ENCODE measurements at regions of chr3 and their contacts with region 1.

Region 1: GRCh38 chr3:160501325-160501724 is 51.7 kb upstream of the TRIM59 start:
- DNase-seq: no peak
- ATAC-seq: no peak
- H3K4me3 ChIP-seq: no peak overlapping the region
- H3K27ac ChIP-seq: no peak overlapping the region
- H3K4me1 ChIP-seq: no peaks in the 10 kb centered on the region
- H3K27me3 ChIP-seq: no peaks in the 10 kb centered on the region
- CTCF ChIP-seq: no peak
- POLR2A ChIP-seq: no peak

Region 2: GRCh38 chr3:160133757-160134156 is 367.6 kb before region 1 on chr3:
- in situ Hi-C with region 1: no loop called
- intact Hi-C with region 1: no loop called
- DNase-seq: no peak
- ATAC-seq: no peak
- H3K4me3 ChIP-seq: no peak overlapping the region
- H3K27ac ChIP-seq: no peak overlapping the region
- H3K4me1 ChIP-seq: no peaks in the 10 kb centered on the region
- H3K27me3 ChIP-seq: no peaks in the 10 kb centered on the region
- CTCF ChIP-seq: no peak
- POLR2A ChIP-seq: no peak

Region 3: DNA sequence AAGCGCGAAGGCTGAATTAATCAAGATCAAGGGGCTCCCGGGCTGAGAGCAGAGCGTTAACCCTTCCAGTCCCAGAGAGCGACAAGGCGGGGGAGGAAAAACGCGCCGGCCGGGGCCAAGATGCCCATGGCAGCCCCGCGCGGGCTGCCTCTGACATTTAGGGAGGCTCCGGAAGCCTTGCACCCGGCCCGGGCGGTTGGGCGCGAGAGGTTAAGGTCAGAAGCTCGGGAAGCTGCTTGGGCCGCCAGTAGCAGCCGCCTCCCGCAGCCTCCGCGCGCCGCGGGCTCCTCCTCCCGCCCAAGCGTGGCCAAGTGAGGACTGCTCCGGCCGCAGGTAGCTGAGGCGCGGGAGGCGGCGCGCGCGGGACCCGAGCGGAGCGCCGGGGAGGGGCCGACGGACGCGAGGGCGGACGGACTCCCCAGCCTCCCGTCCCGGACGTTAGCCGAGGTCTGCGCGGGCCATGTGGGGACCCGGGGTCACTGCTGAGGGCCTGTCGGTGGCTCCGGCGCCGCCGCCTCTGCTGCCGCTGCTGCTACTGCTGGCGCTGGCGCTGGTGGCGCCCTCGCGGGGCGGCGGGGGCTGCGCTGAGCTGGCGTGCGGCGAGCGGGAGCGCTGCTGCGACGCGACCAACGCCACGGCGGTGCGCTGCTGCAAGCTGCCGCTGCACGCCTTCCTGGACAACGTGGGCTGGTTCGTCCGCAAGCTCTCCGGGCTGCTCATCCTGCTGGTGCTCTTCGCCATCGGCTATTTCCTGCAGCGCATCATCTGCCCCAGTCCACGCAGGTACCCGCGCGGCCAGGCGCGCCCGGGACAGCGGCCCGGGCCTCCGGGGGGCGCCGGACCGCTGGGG is 275.9 kb before region 1 on chr3 and contains the start of gene C3orf80:
- in situ Hi-C with region 1: no loop called
- intact Hi-C with region 1: no loop called
- DNase-seq: no peak
- ATAC-seq: peak; percentile 26 to 65
- H3K4me3 ChIP-seq: peak within 1 kb of the TSS; percentile 22 to 66 (median 50)
- H3K27ac ChIP-seq: no peak within 1 kb of the TSS
- H3K4me1 ChIP-seq: peaks cover 0 to 19% of the 10 kb centered on the region in 2 donors
- H3K27me3 ChIP-seq: peaks cover 30 to 57% (median 51%) of the 10 kb centered on the region in 3 donors
- CTCF ChIP-seq: peak in 1 of 5 experiments; percentile 6
- POLR2A ChIP-seq: no peak
- total RNA-seq, gene C3orf80: 0.10 TPM in 1 of 4 donors, not detected in the others

Region 4: GRCh38 chr3:160413613-160414248 is 87.6 kb before region 1 on chr3:
- in situ Hi-C with region 1: no loop called
- intact Hi-C with region 1: no loop called
- DNase-seq: peak in 1 of 2 donors; percentile 34
- ATAC-seq: peak; percentile 60 to 78
- H3K4me3 ChIP-seq: no peak overlapping the region
- H3K27ac ChIP-seq: no peak overlapping the region
- H3K4me1 ChIP-seq: no peaks in the 10 kb centered on the region
- H3K27me3 ChIP-seq: no peaks in the 10 kb centered on the region
- CTCF ChIP-seq: peak; percentile 55 to 87 (median 74)
- POLR2A ChIP-seq: no peak

Region 5: GRCh38 chr3:160486459-160486869 is 14.9 kb before region 1 on chr3:
- in situ Hi-C with region 1: no loop called
- intact Hi-C with region 1: no loop called
- DNase-seq: no peak
- ATAC-seq: no peak
- H3K4me3 ChIP-seq: no peak overlapping the region
- H3K27ac ChIP-seq: no peak overlapping the region
- H3K4me1 ChIP-seq: no peaks in the 10 kb centered on the region
- H3K27me3 ChIP-seq: no peaks in the 10 kb centered on the region
- CTCF ChIP-seq: peak in 3 of 5 experiments; percentile 27 to 66 (median 50)
- POLR2A ChIP-seq: no peak

Region 6: DNA sequence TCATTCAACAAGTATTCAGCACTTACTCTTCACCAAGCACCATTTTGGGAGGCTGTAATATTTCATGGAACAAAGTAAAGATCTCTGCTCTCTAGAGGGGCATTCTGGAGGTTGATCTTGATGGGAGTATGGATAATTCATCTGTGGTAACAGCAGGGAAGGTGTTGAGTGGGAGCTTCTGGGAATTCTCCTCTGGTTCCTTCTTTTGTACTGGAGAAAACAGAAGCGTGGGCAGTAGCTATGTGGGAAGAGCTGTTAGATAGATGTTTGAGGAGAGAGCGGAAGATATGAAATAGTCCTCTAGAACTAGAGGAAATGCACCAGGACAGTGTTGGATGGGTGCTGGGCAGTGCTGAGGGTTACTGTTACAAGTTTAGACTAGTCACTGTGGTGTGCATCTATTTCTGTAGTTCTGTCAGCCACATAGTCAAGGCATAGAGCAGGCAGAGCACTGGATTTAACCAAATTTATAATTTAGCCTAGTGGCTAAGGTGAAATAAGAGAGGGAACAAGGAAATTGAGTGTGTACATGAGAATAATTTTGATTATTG is 729.4 kb after region 1 on chr3:
- in situ Hi-C with region 1: loop called in 1 of 4 experiments (anchors 25 kb)
- intact Hi-C with region 1: no loop called
- DNase-seq: no peak
- ATAC-seq: no peak
- H3K4me3 ChIP-seq: no peak overlapping the region
- H3K27ac ChIP-seq: no peak overlapping the region
- H3K4me1 ChIP-seq: peaks cover 0 to 3% of the 10 kb centered on the region in 2 donors
- H3K27me3 ChIP-seq: no peaks in the 10 kb centered on the region
- CTCF ChIP-seq: no peak
- POLR2A ChIP-seq: no peak

Measured in gastrocnemius medialis (tissue), 4 donors.